Cardiac septum (tissue), 1 donor: ENCODE measurements at regions of chr17 and their contacts with region 1.

Region 1: GRCh38 chr17:78415821-78416711 is 37.6 kb downstream of the PGS1 start:
- DNase-seq: no peak

Region 2: GRCh38 chr17:78351449-78352006 is 64.5 kb before region 1 on chr17:
- intact Hi-C with region 1: no loop called
- DNase-seq: peak; percentile 94

Region 3: DNA sequence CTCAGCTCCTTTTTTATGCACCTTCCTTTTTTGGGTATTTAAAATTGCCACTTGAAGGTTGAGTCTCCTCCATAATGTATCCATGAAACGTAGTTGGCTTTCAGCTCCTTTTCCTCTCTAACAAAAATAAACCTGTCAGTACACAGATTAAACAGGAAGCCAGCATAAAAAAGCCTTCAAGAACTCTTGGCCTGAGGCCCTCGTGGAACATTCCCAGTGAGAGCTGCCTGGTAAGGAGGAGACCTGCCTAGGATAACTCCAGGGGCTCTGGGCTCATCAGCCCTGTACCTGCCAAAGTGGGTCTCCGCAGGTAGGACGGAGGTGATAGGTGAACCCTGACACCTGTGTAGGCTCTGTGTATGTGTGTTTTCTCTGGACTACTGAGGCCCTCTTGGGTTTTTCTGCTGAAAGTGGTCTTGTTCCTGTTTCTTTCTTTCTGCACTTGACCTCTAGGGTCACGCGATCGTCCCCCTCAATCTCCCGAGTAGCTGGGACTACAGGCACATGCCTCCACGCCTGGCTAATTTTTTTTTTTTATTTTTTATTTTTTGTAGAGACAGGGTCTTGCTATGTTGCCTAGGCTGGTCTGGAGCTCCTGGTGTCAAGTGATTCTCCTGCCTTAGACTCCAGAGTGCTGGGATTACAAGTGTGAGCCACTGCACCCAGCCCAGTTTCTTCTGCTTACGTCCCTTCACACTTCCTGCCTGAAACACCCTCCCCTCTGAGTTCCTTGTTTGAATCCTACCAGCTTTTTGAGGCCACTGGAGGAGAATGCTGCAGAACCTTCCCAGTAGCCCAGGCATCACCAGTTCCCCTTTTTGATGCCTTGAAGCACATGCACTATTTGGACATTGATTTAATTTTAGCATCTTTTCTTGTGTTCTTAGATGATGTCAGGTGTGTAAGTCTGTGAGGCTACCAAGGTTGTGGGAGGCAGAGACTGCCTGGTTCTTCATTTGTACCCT is 27.8 kb before region 1 on chr17:
- intact Hi-C with region 1: loop called (anchors 2 kb)
- DNase-seq: no peak